Kidney (tissue), 22 donors: ENCODE measurements at regions of chr17 and their contacts with region 1.

Region 1: GRCh38 chr17:1124896-1125787 is 54.6 kb downstream of the ABR start:
- DNase-seq: peak in 1 of 5 donors; percentile 39
- H3K4me3 ChIP-seq: no peak overlapping the region
- H3K27ac ChIP-seq: no peak overlapping the region
- H3K4me1 ChIP-seq: peaks cover 0 to 6% (median 5%) of the 10 kb centered on the region in 3 donors
- H3K27me3 ChIP-seq: no peaks in the 10 kb centered on the region
- CTCF ChIP-seq: no peak

Region 2: GRCh38 chr17:1022278-1023024 is 102.7 kb before region 1 on chr17:
- intact Hi-C with region 1: no loop called
- DNase-seq: no peak
- H3K4me3 ChIP-seq: no peak overlapping the region
- H3K27ac ChIP-seq: no peak overlapping the region
- H3K4me1 ChIP-seq: peaks cover 0 to 7% (median 0%) of the 10 kb centered on the region in 3 donors
- H3K27me3 ChIP-seq: no peaks in the 10 kb centered on the region
- CTCF ChIP-seq: no peak

Region 3: DNA sequence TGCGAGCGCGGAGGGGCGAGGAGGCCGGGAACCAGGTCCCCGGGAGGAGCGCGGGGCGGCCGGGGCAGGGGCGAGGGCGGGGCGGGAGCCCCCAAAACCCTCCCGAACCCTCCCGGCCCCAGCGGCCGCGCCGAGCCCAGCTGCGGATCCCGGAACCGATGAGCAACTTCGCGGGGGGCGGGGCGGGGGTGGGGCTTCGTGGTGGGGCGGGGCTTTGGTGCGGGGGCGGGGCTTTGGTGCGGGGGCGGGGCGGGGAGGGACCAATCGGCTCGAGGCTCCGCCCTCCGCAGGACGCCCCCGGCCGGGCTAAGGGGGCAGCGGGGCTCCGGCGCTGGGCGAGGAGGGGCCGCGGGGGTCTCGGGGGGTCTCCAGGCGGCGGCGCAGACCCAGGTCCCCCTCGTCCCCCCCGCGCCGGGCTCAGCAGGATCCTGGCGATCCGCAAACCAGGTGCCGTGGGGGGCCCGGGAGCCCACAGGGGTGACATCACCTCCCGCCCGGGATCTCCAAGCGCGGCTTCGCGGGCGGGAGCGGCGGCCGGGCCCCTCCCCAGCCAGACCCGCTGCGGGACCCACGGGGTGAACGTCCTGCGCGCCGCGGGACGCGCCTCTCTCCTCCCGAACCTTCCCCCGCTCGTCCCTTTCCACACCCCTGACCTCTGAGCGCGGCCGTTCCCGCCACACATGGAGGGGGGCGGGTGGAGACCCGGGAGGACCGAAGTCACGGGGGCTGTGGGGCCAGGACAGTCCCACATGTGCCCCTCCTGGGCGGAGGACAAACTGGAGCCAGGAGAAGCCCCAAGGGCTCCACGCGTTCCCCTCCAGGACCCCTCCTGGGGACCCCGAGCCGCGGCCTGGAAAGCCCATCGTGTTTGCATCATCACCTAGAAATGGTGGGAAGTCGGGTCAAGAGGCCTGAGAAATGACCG is 54.9 kb after region 1 on chr17 and contains the start of gene ABR:
- intact Hi-C with region 1: loop called (anchors 5 kb)
- DNase-seq: peak in 3 of 5 donors; percentile 48 to 82 (median 62)
- H3K4me3 ChIP-seq: peak within 1 kb of the TSS in 1 of 3 donors; percentile 44
- H3K27ac ChIP-seq: no peak within 1 kb of the TSS
- H3K4me1 ChIP-seq: peaks cover 0 to 10% (median 0%) of the 10 kb centered on the region in 3 donors
- H3K27me3 ChIP-seq: no peaks in the 10 kb centered on the region
- CTCF ChIP-seq: no peak
- total RNA-seq, gene ABR: 116 TPM

Region 4: GRCh38 chr17:1251866-1252608 is 126.9 kb after region 1 on chr17:
- intact Hi-C with region 1: no loop called
- DNase-seq: peak in 1 of 5 donors; percentile 49
- H3K4me3 ChIP-seq: no peak overlapping the region
- H3K27ac ChIP-seq: no peak overlapping the region
- H3K4me1 ChIP-seq: no peaks in the 10 kb centered on the region
- H3K27me3 ChIP-seq: no peaks in the 10 kb centered on the region
- CTCF ChIP-seq: no peak